ENCODE measurements at regions of chr2 and their contacts with region 1.

Region 1: DNA sequence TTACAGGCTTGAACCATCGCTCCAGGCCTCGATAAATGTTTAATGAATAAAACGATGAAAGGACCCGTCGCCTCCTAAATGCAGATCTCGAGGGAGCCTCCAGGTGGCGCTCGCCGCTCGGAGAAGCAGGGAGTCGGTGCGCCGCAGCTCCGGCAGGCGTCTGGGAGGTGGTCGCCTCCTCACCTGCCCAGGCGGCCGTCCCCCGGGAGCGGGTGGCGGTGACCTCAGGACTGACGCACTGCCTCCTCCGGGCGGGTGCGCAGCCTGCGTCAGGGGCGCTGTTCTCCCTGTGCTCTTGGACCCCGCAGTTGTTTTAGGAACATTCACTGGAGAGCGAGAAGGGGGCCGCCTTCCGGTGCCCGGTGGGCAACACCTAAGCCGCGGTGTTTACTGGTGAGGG is 38.6 kb upstream of the POLE4 start:
- DNase-seq: peak; percentile 69 to 82
- ATAC-seq: peak; percentile 73 to 88
- H3K4me3 ChIP-seq: peak overlapping the region; percentile 53
- H3K27ac ChIP-seq: peak overlapping the region; percentile 12 to 66; a peak in 3 of 6 replicates
- H3K4me1 ChIP-seq: peaks cover 6% of the 10 kb centered on the region
- CTCF ChIP-seq: peak; percentile 98
- EP300 ChIP-seq: no peak
- POLR2A ChIP-seq: no peak
- RAD21 ChIP-seq: peak; percentile 96 to 99

Region 2: GRCh38 chr2:74930811-74931486 is 11.1 kb after region 1 on chr2:
- CTCF ChIA-PET with region 1: interaction called, 25 read pairs
- POLR2A ChIA-PET with region 1: no interaction called
- DNase-seq: no peak
- ATAC-seq: no peak
- H3K4me3 ChIP-seq: no peak overlapping the region
- H3K27ac ChIP-seq: no peak overlapping the region
- H3K4me1 ChIP-seq: peaks cover 8% of the 10 kb centered on the region
- CTCF ChIP-seq: no peak
- EP300 ChIP-seq: no peak
- POLR2A ChIP-seq: no peak
- RAD21 ChIP-seq: no peak

Region 3: GRCh38 chr2:74982577-74982976 is 62.8 kb after region 1 on chr2:
- CTCF ChIA-PET with region 1: interaction called, 16 read pairs
- POLR2A ChIA-PET with region 1: no interaction called
- DNase-seq: peak in 1 of 2 experiments; percentile 19
- ATAC-seq: peak in 1 of 2 experiments; percentile 58; a peak in 2 of 6 replicates
- H3K4me3 ChIP-seq: no peak overlapping the region
- H3K27ac ChIP-seq: no peak overlapping the region
- H3K4me1 ChIP-seq: no peaks in the 10 kb centered on the region
- CTCF ChIP-seq: peak; percentile 42
- EP300 ChIP-seq: no peak
- POLR2A ChIP-seq: no peak
- RAD21 ChIP-seq: peak; percentile 51 to 57

Region 4: GRCh38 chr2:75064691-75065396 is 145.0 kb after region 1 on chr2:
- CTCF ChIA-PET with region 1: interaction called, 17 read pairs
- POLR2A ChIA-PET with region 1: no interaction called
- DNase-seq: peak; percentile 42 to 58
- ATAC-seq: peak; percentile 75 to 93; a peak in 5 of 6 replicates
- H3K4me3 ChIP-seq: no peak overlapping the region
- H3K27ac ChIP-seq: no peak overlapping the region
- H3K4me1 ChIP-seq: no peaks in the 10 kb centered on the region
- CTCF ChIP-seq: peak; percentile 82
- EP300 ChIP-seq: no peak
- POLR2A ChIP-seq: no peak
- RAD21 ChIP-seq: peak; percentile 67 to 80

Region 5: DNA sequence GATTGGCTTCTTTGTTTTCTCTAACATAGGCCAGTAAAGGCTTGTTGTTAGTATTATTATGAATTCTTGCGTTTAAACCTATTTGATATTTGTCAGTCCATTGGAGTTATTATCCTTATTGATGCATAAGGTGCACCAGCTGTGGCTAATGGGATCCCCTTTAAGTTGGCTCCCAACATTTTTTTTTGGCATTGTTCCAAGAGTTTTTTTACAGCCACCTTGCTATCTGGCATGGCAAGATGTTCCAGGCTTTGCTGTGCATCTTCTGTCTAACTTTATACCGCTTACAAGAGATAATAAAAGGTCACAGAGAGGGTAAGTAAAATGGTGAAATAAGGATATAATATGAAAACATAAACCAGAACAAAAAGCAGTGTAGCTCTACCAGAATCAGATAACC is 437.0 kb after region 1 on chr2:
- CTCF ChIA-PET with region 1: no interaction called
- POLR2A ChIA-PET with region 1: no interaction called
- DNase-seq: no peak
- ATAC-seq: no peak
- H3K4me3 ChIP-seq: no peak overlapping the region
- H3K27ac ChIP-seq: no peak overlapping the region
- H3K4me1 ChIP-seq: no peaks in the 10 kb centered on the region
- CTCF ChIP-seq: no peak
- EP300 ChIP-seq: no peak
- POLR2A ChIP-seq: no peak
- RAD21 ChIP-seq: no peak